Activated T-helper 1 cell treated with anti-CD3 and anti-CD28 coated beads, Interleukin-12 subunit alpha, Interleukin-12 subunit beta, Interleukin-2, Interleukin-4 antibody, amounts not matched to agents 30 ng/mL and 10 ng/mL and 1 ng/mL, durations not matched to agents 14 hours and 24 hours and 36 hours (primary cell): ENCODE measurements at regions of chr19 and their contacts with region 1.

Region 1: DNA sequence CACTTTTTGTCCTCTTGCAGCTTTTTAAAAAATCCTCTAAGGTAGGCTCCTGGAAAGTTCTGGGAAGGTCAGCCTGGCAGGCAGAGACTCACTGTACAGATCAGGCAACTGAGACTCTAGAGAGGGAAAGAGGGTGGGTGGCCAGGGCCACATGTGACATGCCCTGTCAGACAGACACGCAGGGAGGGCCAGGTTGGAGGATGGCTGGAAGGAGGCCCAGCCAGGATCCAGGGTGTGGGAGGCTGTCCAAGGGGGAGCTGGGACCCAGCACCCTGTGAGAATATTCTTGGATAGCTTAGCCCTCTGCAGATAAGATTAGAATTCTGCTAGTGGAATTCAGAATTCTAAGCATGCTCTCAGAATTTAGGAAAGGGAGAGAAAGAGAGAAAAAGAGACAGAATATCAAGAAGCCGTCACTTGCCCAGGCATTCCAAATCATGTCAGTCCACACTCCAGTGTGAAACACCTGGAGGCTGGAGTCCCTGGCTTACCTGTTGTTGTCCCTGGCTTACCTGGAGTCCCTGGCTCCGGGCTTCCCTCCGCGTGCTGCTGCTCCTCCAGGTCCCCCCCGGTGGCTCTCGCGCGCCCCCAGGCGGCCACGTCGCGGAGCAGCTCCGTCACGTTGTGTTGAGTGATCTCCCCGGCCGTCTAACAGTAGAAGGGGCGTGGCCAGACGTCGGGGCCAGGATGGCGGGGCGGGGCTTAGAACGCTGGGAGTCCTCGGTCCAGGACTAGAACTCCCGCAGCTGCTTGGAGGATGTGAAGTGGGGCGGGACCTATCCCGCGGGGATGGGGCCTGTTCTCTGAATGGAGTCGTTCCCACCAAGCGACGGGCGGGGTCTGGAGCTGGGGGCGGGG is 2.8 kb upstream of the TNNI3 start:
- DNase-seq: peak; percentile 86
- H3K4me3 Mint-ChIP-seq: no peak overlapping the region
- H3K27ac Mint-ChIP-seq: no peak overlapping the region
- H3K4me1 Mint-ChIP-seq: no peaks in the 10 kb centered on the region
- H3K27me3 Mint-ChIP-seq: peaks cover 46% of the 10 kb centered on the region

Region 2: GRCh38 chr19:55173714-55174409 is 13.5 kb after region 1 on chr19:
- intact Hi-C with region 1: loop called (anchors 2 kb)
- DNase-seq: peak; percentile 45
- H3K4me3 Mint-ChIP-seq: peak overlapping the region; percentile 72
- H3K27ac Mint-ChIP-seq: no peak overlapping the region
- H3K4me1 Mint-ChIP-seq: peaks cover 15% of the 10 kb centered on the region
- H3K27me3 Mint-ChIP-seq: peaks cover 53% of the 10 kb centered on the region

Region 3: DNA sequence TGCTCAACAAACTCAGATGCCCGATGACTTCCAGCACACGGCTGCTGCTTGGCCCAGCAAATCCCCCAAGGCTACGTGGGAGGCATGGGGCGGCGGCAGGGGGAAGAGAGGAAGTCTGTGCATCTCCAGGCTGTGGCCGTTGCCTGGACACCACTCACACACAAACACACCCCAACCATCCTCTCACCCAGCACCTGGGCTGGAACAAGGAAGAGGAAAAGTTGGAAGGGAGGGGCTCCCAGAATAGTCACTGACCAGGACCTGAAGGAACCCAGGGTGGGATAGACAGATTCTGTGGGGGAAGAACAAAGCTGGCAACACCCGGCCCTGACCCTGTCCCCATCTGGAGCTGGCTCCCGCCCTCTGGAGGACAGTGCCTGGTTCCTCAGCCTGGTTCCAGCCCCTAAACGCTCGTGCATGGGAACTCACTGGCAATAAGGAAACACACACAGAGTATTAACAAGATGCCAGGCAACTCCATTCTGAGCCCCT is 87.3 kb after region 1 on chr19:
- intact Hi-C with region 1: no loop called
- DNase-seq: no peak
- H3K4me3 Mint-ChIP-seq: no peak overlapping the region
- H3K27ac Mint-ChIP-seq: no peak overlapping the region
- H3K4me1 Mint-ChIP-seq: peaks cover 35% of the 10 kb centered on the region
- H3K27me3 Mint-ChIP-seq: no peaks in the 10 kb centered on the region

Region 4: GRCh38 chr19:55258828-55259539 is 98.6 kb after region 1 on chr19 and contains the start of gene PPP6R1:
- intact Hi-C with region 1: no loop called
- DNase-seq: peak; percentile 93
- H3K4me3 Mint-ChIP-seq: peak within 1 kb of the TSS; percentile 96
- H3K27ac Mint-ChIP-seq: peak within 1 kb of the TSS; percentile 98
- H3K4me1 Mint-ChIP-seq: peaks cover 46% of the 10 kb centered on the region
- H3K27me3 Mint-ChIP-seq: no peaks in the 10 kb centered on the region
- total RNA-seq, gene PPP6R1: 200 and 202 TPM in 2 replicates

Region 5: DNA sequence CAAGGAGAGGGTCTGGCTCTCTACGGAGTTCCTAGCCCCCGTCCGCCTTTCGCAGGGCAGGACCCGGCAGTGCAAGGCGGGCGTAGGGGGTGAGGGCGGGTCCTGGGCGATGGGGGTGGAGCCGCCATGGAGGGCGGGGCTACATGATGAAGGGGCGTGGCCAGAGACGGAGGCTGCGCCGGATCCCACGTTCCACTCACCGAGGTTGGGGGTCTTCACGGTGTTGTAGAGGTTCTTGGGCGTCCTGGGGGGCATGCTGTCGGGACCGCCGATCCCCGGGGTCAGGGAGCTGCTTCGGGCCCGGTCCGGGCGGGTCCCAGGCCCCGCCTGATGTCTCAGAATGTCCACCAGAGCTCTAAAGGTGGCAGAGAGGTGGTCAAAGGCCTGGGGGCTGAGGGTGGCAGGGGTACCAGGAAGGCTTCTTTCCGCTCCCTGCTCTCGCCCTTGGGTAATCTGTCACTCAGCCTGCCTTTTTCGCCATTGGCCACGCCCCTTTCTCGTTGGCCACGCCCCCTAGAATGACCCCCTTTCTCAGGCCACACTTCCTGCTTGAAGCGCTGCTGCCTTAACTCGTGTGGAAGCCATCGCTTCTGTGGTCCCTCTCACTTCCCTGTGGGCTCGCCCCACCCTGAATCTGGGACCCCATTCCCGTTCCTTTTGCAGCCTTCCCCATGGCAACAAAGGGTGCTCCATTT is 280.2 kb after region 1 on chr19:
- intact Hi-C with region 1: loop called (anchors 5 kb)
- DNase-seq: no peak
- H3K4me3 Mint-ChIP-seq: no peak overlapping the region
- H3K27ac Mint-ChIP-seq: peak overlapping the region; percentile 2
- H3K4me1 Mint-ChIP-seq: peaks cover 17% of the 10 kb centered on the region
- H3K27me3 Mint-ChIP-seq: peaks cover 61% of the 10 kb centered on the region

Region 6: DNA sequence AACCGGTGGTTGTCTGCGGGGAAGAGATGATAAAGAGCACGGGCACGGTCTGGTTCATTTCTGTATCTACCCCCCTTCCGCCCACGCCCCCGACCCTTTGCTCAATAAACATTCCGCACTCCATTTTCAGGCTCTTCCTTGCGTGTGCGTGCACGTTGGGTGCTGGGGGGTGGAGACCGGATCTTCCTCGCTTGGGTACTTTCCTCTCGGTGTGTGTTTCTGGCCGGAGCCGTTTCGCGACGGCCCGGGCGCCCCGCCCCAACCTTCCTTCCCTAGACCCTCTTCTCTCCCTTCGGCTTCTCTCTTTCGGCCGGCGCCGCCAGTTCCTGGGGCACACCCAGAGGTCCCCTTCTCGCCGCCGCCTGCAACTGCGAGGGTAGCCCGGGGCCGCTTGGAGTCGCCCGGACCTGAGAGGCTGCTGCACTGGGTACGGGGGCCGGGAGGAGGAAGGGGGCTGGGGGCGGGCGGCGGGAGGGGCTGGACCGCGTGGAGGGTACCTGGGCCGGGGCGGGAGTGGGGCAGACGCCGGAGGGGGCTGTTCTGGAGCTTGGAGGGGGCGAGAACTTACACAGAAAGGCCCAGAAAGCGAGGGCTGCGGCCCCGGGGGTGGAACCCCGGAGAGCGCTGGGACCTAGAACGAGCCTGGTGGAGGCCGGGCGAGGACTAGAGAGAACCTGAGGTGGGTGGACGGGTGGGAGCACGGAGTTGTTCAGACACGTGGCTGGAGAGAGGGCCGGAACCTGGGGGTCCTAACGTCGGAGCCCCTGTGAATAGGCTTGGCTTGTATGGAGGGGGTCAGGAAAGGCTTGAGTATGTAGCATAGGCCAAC is 483.2 kb after region 1 on chr19 and contains the start of gene ZNF581:
- intact Hi-C with region 1: no loop called
- DNase-seq: peak; percentile 77
- H3K4me3 Mint-ChIP-seq: peak within 1 kb of the TSS; percentile 100
- H3K27ac Mint-ChIP-seq: peak within 1 kb of the TSS; percentile 99
- H3K4me1 Mint-ChIP-seq: peaks cover 43% of the 10 kb centered on the region
- H3K27me3 Mint-ChIP-seq: no peaks in the 10 kb centered on the region
- total RNA-seq, gene ZNF581: 35.6 and 36.4 TPM in 2 replicates